ENCODE measurements at regions of chr4 and their contacts with region 1.

Region 1: GRCh38 chr4:15649914-15650545 is 5.1 kb downstream of the FBXL5 start:
- DNase-seq: no peak
- ATAC-seq: peak; percentile 56 to 68
- H3K4me3 ChIP-seq: no peak overlapping the region
- H3K27ac ChIP-seq: no peak overlapping the region
- H3K4me1 ChIP-seq: peaks cover 1% of the 10 kb centered on the region
- H3K27me3 ChIP-seq: no peaks in the 10 kb centered on the region

Region 2: DNA sequence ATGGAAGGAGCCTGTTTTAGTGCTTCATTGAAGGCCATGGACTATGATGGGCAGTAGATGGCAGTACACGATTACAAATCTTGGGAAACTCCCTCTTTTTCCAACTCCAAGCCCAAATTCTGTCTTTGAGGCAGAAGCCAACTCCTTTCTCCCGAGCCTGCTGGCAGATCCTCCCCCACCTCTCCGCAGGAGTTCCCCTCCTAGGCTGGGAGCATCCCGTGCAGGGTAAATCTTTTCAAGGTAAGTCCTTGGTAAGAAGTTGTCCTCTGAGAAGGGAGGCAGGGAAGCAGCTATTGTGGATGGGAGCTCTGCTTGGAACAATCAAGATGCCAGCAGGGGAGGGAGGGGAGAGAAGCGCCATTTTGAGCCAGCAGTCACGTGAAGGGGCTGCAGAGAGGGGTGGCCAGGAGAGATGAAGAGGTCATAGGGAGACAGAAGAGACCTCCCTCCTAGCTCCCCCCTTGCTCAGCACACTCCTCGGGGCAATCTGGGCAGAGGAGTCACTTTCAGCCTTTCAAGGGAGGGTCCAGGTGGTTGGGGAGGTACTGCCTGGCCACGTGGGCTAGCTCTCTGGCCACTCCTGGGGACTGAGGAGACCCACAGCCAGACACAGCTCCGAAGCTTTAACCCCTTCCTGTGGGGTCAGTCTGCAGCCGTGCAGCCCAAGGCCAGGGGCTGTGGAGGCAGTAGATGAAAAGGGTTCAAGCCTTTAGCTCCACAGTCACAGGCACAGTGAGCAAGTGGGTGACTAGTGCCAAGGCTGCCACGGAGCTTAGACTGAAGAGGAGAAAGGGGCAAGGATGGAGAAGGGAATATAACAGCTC is 170.7 kb before region 1 on chr4:
- intact Hi-C with region 1: loop called in 2 of 4 experiments (anchors 10 kb)
- DNase-seq: peak; percentile 49 to 71 (median 70)
- ATAC-seq: peak; percentile 84 to 86
- H3K4me3 ChIP-seq: peak overlapping the region; percentile 26
- H3K27ac ChIP-seq: peak overlapping the region; percentile 74
- H3K4me1 ChIP-seq: no peaks in the 10 kb centered on the region
- H3K27me3 ChIP-seq: no peaks in the 10 kb centered on the region

Region 3: DNA sequence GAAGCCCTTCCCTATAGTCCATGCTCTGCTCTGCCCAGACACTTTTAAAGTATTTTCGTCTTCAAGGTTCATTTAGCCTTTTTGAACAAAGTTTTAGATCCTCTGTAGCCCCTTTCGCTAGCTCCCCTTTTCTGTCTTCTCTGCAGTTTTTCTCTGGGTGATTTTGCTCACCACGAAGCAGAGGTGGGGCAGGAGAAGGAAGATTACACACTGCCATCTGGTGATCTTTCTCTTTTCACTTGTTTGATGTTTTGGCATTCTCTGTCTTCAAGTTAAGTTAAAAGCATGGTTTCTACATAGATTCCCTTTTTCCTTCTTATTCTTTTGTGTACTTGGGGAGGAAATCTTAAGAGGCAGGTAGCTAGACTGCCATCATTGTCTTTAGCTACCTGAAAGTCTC is 136.5 kb before region 1 on chr4:
- intact Hi-C with region 1: no loop called
- DNase-seq: no peak
- ATAC-seq: no peak
- H3K4me3 ChIP-seq: no peak overlapping the region
- H3K27ac ChIP-seq: no peak overlapping the region
- H3K4me1 ChIP-seq: no peaks in the 10 kb centered on the region
- H3K27me3 ChIP-seq: no peaks in the 10 kb centered on the region

Measured in right cardiac atrium (tissue), 5 donors.